Mammary epithelial cell (primary cell): ENCODE measurements at regions of chr3 and their contacts with region 1.

Region 1: GRCh38 chr3:27721717-27722542 is at the start of gene EOMES:
- DNase-seq: peak; percentile 76
- H3K4me3 ChIP-seq: peak within 1 kb of the TSS; percentile 59 to 69 (median 66)
- H3K27ac ChIP-seq: no peak within 1 kb of the TSS
- H3K4me1 ChIP-seq: peaks cover 20% of the 10 kb centered on the region
- H3K27me3 ChIP-seq: peaks cover 3% of the 10 kb centered on the region
- CTCF ChIP-seq: peak; percentile 33 to 58
- total RNA-seq, gene EOMES: 0.17 to 0.94 TPM

Region 2: DNA sequence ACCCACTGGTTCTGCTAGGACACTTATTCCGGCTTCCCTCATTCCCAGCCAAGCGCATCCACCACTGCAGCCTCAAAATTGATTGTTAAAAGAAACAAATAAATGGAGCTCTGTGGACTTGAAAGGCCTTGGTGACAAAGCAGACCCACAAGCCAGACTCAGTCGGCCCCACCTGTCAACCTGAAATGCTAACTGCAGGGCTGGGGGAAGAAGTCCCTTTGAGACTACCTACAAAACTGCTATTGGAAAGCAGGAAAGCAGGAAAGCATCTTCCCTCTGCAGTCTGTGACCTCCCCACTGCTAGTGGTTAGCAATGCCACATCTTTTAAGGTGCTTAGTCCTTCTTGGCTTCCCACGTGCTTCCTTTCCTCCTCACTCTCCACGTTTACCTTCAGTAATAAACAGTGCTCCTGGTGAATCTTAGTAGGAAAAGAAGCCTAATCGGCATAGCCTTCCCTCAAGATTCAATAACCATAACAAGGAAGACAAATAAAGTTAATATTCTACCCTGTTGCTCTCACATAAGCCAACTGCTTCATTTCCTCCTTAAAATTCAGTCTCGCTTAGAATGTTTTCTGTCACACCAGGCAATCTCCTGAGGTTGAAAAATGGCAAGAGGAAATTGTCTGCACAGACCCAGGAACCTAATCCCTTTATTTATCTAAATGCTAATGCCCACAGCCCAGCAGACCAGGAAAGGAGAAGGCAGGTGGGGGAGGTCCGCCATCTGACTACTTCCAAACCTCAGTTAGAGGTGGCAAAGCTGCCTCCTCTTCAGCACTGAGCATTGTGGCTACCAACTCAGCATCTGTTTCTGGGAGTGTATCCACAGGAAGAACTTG is 648.9 kb before region 1 on chr3:
- CTCF ChIA-PET with region 1: no interaction called
- dilution Hi-C with region 1: no loop called
- in situ Hi-C with region 1: no loop called
- intact Hi-C with region 1: no loop called
- DNase-seq: no peak
- H3K4me3 ChIP-seq: no peak overlapping the region
- H3K27ac ChIP-seq: no peak overlapping the region
- H3K4me1 ChIP-seq: no peaks in the 10 kb centered on the region
- H3K27me3 ChIP-seq: no peaks in the 10 kb centered on the region
- CTCF ChIP-seq: no peak

Region 3: GRCh38 chr3:27568393-27568792 is 153.5 kb before region 1 on chr3:
- CTCF ChIA-PET with region 1: no interaction called
- dilution Hi-C with region 1: no loop called
- in situ Hi-C with region 1: no loop called
- intact Hi-C with region 1: no loop called
- DNase-seq: peak; percentile 80
- H3K4me3 ChIP-seq: no peak overlapping the region
- H3K27ac ChIP-seq: no peak overlapping the region
- H3K4me1 ChIP-seq: peaks cover 19% of the 10 kb centered on the region
- H3K27me3 ChIP-seq: no peaks in the 10 kb centered on the region
- CTCF ChIP-seq: no peak

Region 4: GRCh38 chr3:27758083-27758482 is 36.2 kb after region 1 on chr3:
- CTCF ChIA-PET with region 1: no interaction called
- dilution Hi-C with region 1: no loop called
- in situ Hi-C with region 1: no loop called
- intact Hi-C with region 1: loop called (anchors 2 kb)
- DNase-seq: peak; percentile 95
- H3K4me3 ChIP-seq: no peak overlapping the region
- H3K27ac ChIP-seq: peak overlapping the region; percentile 75
- H3K4me1 ChIP-seq: peaks cover 29% of the 10 kb centered on the region
- H3K27me3 ChIP-seq: no peaks in the 10 kb centered on the region
- CTCF ChIP-seq: no peak

Region 5: GRCh38 chr3:27792869-27793268 is 70.9 kb after region 1 on chr3:
- CTCF ChIA-PET with region 1: no interaction called
- dilution Hi-C with region 1: no loop called
- in situ Hi-C with region 1: no loop called
- intact Hi-C with region 1: loop called (anchors 10 kb)
- DNase-seq: no peak
- H3K4me3 ChIP-seq: no peak overlapping the region
- H3K27ac ChIP-seq: no peak overlapping the region
- H3K4me1 ChIP-seq: peaks cover 11% of the 10 kb centered on the region
- H3K27me3 ChIP-seq: no peaks in the 10 kb centered on the region
- CTCF ChIP-seq: no peak

Region 6: DNA sequence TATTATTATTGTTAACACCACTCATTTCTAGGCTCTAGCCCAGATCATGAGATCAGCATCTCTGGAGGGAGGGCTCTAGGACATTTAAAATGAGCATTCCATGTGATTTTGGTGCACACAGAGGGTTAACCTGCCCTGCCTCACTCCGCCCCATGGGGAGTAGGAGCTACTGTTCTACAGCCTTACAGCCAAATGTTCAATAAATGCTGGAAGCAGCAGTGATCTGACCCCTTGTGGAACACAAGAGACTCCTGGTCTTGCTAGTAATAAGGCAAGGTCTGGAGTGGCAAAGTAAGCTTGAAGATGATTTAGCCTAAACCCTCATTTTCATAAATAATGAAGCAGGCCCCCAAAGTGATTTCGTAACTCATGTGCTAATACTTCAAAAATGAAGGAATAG is 166.6 kb after region 1 on chr3:
- CTCF ChIA-PET with region 1: interaction called, 6 read pairs
- dilution Hi-C with region 1: no loop called
- in situ Hi-C with region 1: no loop called
- intact Hi-C with region 1: loop called (anchors 2 kb)
- DNase-seq: peak; percentile 2
- H3K4me3 ChIP-seq: no peak overlapping the region
- H3K27ac ChIP-seq: no peak overlapping the region
- H3K4me1 ChIP-seq: no peaks in the 10 kb centered on the region
- H3K27me3 ChIP-seq: peaks cover 5% of the 10 kb centered on the region
- CTCF ChIP-seq: peak in 1 of 2 donors; percentile 31

Region 7: GRCh38 chr3:27943106-27943505 is 221.2 kb after region 1 on chr3:
- CTCF ChIA-PET with region 1: no interaction called
- dilution Hi-C with region 1: no loop called
- in situ Hi-C with region 1: no loop called
- intact Hi-C with region 1: loop called (anchors 5 kb)
- DNase-seq: peak; percentile 20
- H3K4me3 ChIP-seq: no peak overlapping the region
- H3K27ac ChIP-seq: no peak overlapping the region
- H3K4me1 ChIP-seq: no peaks in the 10 kb centered on the region
- H3K27me3 ChIP-seq: no peaks in the 10 kb centered on the region
- CTCF ChIP-seq: peak; percentile 34 to 58

Region 8: GRCh38 chr3:28286595-28286994 is 564.7 kb after region 1 on chr3:
- CTCF ChIA-PET with region 1: no interaction called
- dilution Hi-C with region 1: no loop called
- in situ Hi-C with region 1: no loop called
- intact Hi-C with region 1: loop called (anchors 2 kb)
- DNase-seq: peak; percentile 27
- H3K4me3 ChIP-seq: no peak overlapping the region
- H3K27ac ChIP-seq: no peak overlapping the region
- H3K4me1 ChIP-seq: no peaks in the 10 kb centered on the region
- H3K27me3 ChIP-seq: no peaks in the 10 kb centered on the region
- CTCF ChIP-seq: peak; percentile 50 to 61